Heart left ventricle (tissue), 16 donors: ENCODE measurements at regions of chr7 and their contacts with region 1.

Region 1: GRCh38 chr7:34165929-34166550 is 260.7 kb downstream of the BMPER start:
- DNase-seq: no peak
- ATAC-seq: no peak
- H3K4me3 ChIP-seq: no peak overlapping the region
- H3K27ac ChIP-seq: no peak overlapping the region
- H3K4me1 ChIP-seq: peaks cover 0 to 3% (median 0%) of the 10 kb centered on the region in 12 donors
- H3K27me3 ChIP-seq: no peaks in the 10 kb centered on the region
- CTCF ChIP-seq: peak; percentile 14 to 56 (median 38)
- POLR2A ChIP-seq: no peak

Region 2: DNA sequence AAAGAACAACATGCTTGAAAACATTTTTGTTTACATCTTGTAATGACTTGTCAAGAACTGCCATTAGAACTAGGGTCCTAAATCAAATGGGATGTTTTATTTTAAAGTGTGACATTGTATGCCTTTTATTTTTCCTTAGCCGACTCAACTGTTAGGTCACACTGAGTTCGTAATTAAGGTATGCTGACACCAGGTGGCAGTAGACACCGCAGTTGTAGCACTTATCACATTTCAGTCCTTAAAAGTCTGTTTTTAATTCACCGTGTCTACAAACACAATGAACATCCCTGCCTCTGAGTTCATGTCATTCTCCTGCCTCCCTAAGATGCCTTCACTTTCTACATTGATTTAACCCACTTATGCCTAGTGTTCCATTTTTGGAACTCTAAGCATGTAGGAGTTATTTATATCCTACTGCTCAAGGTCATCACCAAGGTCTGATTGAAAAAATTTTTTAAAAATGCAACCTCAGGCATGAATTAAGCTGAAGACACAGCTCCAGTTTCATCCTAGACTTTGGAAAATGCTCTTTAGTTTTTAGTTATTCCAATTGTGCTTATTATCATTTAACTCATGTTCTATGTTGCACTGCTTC is 74.6 kb before region 1 on chr7:
- intact Hi-C with region 1: loop called in 1 of 10 experiments (anchors 10 kb)
- DNase-seq: no peak
- ATAC-seq: no peak
- H3K4me3 ChIP-seq: no peak overlapping the region
- H3K27ac ChIP-seq: no peak overlapping the region
- H3K4me1 ChIP-seq: peaks cover 0 to 7% (median 2%) of the 10 kb centered on the region in 12 donors
- H3K27me3 ChIP-seq: no peaks in the 10 kb centered on the region
- CTCF ChIP-seq: peak; percentile 20 to 61 (median 47)
- POLR2A ChIP-seq: no peak